ENCODE measurements at regions of chr19 and their contacts with region 1.

Region 1: DNA sequence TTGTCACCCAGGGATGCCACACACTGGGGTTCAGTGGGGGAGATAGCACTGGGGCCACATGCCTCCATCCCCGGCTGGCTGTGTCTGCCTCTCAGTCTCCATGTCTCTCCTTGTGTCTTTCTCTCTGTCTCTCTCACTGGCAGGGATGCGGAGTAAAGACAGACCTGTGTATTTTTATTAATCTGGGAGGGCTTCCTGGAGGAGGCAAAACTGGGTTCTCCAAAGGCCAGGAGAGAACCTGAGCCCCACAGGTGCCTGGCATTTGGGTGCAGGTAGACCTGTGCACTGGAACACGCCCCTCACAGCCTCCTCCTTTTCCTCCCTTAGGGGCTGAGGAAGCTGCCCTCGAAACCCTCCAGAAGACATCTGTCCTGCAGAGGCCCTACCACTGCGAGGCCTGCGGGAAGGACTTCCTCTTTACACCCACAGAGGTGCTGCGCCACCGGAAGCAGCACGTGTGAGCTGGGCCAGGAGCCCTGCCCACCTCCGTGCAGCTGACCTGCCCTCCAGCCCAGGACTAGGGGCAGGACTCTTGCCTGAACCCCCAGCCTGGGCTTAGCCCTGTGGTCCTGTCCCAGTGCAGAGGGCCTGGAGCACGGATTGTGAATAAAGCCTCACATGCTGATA is 32.7 kb downstream of the DHX34 start:
- DNase-seq: peak in 2 of 3 donors; percentile 9 to 71
- ATAC-seq: peak; percentile 66
- H3K4me3 ChIP-seq: no peak overlapping the region
- H3K4me1 ChIP-seq: peaks cover 2% of the 10 kb centered on the region
- CTCF ChIP-seq: no peak

Region 2: DNA sequence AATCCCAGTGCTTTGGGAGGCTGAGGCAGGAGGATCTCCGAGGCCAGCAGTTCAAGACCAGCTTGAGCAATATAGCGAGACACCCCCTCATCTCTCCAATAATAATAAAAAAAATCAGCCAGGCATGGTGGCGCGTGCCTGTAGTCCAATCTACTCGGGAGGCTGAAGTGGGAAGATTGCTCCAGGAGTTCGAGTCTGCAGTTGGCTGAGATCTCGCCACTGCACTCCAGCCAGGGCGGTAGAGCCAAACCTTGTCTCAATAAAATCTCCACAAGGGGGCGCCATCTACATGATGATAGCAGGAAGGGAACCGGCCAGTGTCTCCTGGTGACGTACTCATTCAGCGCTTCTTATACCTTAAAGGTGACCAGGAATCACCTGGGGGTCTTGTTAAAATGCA is 85.7 kb before region 1 on chr19:
- intact Hi-C with region 1: loop called in 1 of 2 experiments (anchors 10 kb)
- DNase-seq: peak in 2 of 3 donors; percentile 58 to 97
- ATAC-seq: peak; percentile 99
- H3K4me3 ChIP-seq: no peak overlapping the region
- H3K4me1 ChIP-seq: no peaks in the 10 kb centered on the region
- CTCF ChIP-seq: peak; percentile 57